ENCODE measurements at regions of chr4 and their contacts with region 1.

Region 1: GRCh38 chr4:76198411-76199237 is 15.0 kb downstream of the SCARB2 start:
- DNase-seq: peak; percentile 61
- CTCF ChIP-seq: no peak

Region 2: DNA sequence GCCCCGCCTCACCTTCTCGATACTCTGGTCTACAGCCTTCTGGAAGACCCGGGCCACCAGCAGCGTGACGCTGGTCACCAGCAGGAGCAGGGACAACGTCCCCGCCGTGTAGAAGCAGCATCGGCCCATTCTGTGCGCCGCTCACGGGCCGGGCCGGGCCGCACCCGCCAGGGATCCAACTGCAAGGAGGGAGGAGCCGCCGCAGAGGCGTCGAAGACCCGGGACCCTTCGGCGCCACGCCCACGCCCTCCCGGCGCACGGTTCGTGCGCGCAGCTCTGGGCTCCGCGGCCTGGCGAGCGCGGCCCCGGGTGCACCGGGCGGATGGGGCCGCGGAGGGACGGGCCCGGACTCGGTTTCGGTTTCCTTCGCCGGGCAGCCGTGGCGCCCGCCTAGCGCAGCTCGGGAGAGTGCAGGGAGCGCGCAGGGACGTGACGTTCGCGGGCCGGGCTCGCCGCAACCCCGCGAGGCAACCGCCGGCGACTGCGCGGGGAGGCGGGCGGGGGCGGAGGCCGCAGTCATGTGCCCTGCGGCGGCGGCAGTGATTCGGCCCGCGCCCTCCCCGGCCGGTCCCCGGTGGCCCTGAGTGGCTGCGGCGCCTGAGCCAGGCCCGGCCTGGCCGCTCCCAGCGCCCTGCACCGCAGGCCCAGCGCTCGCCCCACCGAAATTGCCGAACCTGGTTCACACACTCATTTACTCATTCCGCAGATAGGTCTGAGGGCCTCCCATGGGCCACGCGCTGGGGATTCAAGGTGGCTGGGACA is 15.0 kb after region 1 on chr4 and contains the start of gene SCARB2:
- CTCF ChIA-PET with region 1: interaction called, 22 read pairs
- POLR2A ChIA-PET with region 1: interaction called, 4 read pairs
- DNase-seq: peak; percentile 81
- CTCF ChIP-seq: no peak

Region 3: DNA sequence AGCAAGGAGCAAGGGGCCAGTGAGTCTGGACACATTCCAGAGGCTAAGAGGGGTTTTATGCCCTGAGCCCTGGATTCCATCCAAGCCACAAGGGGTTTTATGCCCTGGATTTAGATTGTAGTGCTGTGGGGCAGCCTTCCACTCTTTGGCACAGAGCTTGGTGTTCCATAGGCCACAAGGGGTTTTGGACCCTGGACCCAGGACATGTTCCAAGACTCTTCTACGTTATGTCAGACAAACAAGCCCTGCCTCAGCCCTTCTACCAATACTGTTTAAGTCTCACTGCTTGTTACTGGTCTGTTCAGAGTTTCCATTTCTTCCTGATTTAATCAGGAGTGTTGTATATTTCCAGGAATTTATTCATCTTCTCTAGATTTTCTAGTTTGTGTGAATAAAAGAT is 27.8 kb after region 1 on chr4:
- CTCF ChIA-PET with region 1: no interaction called
- POLR2A ChIA-PET with region 1: no interaction called
- DNase-seq: no peak
- CTCF ChIP-seq: no peak